ENCODE measurements at regions of chr12 and their contacts with region 1.

Region 1: DNA sequence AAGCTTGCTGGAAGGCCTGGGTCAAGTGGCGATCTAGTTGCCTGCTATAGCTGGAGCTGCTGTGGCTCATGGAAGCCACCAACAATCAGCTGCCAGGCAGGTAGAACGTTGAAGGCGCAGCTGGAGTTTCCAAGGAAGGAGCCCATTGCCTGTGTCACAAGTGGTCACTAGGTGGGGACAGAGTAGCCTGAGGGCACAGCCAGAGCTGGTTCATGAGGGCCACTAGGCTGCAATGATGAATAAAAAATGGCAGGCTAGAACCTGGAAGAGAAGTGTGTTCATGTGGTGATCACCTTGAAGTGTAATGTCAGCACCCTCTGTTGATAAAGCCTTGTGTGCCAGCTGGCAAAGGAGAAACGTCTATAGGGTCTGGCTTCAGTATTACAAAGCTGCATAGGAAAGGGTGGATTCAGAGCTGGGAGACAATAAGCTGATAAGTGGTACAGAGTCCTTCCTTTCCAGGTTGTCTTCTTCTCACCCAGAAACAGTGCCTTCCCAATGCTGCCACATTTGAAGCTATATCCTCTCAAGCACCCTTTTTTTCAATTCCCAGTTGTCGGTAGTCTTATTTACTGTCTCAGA is 165.8 kb downstream of the EMP1 start:
- DNase-seq: peak; percentile 77
- ATAC-seq: peak; percentile 99
- H3K4me3 ChIP-seq: no peak overlapping the region
- H3K27ac ChIP-seq: no peak overlapping the region
- H3K4me1 ChIP-seq: peaks cover 3 to 7% of the 10 kb centered on the region in 2 experiments; a peak in 3 of 4 replicates
- H3K27me3 ChIP-seq: no peaks in the 10 kb centered on the region
- CTCF ChIP-seq: peak; percentile 89 to 97 (median 94)
- POLR2A ChIP-seq: no peak
- RAD21 ChIP-seq: peak; percentile 88

Region 2: DNA sequence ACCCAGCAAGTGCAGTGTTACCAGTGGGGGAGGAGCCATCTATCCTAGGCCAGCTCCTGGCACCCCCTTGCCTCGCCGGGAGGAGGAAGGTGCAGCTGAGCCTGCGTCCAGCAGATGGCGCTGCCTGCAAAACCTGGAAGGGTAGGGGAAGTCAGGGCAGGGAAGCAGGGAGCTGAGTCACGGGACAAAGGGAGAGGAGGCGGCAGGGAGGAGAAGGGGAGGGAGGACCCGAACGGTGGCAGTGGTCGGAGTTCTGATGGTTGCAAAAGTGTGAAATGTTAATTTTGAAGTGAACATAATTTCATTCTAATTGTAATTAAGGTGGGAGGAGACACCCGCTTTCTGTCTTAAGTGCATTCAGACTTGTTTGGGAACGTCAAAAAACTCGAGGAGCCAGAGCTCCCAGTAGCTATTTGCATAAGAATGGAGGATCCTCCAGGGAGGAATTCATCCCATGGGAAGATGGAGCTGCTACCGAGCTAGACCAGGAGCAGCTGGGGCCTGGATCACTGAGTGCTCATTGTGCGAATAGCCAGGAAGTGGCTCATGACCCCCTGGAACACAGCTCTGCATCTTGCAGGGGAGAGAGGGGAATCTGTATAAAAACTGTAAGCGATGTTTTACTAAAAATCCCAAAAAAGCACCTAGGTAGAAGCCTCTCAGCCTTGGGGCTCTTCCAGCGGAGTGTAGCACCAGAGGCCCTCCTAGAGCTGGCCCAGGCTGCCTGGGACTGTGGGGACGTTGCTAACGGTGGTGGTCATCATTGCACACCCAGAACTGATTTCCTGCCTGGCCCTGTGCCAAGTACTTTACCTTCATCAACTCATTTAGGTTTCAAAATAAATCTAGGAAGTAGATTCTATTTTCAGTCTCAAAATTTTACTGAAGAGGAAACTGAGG is 106.3 kb before region 1 on chr12:
- CTCF ChIA-PET with region 1: interaction called, 16 read pairs
- POLR2A ChIA-PET with region 1: no interaction called
- RAD21 ChIA-PET with region 1: no interaction called
- intact Hi-C with region 1: no loop called
- DNase-seq: peak; percentile 89
- ATAC-seq: peak; percentile 100
- H3K4me3 ChIP-seq: peak overlapping the region in 1 of 2 experiments; percentile 13; a peak in 1 of 4 replicates
- H3K27ac ChIP-seq: no peak overlapping the region
- H3K4me1 ChIP-seq: peaks cover 0 to 15% of the 10 kb centered on the region in 2 experiments; a peak in 2 of 4 replicates
- H3K27me3 ChIP-seq: no peaks in the 10 kb centered on the region
- CTCF ChIP-seq: peak; percentile 91 to 98 (median 97)
- POLR2A ChIP-seq: no peak
- RAD21 ChIP-seq: peak; percentile 98

Region 3: GRCh38 chr12:13270817-13271216 is 91.5 kb before region 1 on chr12:
- CTCF ChIA-PET with region 1: no interaction called
- POLR2A ChIA-PET with region 1: no interaction called
- RAD21 ChIA-PET with region 1: no interaction called
- intact Hi-C with region 1: no loop called
- DNase-seq: no peak
- ATAC-seq: no peak
- H3K4me3 ChIP-seq: no peak overlapping the region
- H3K27ac ChIP-seq: no peak overlapping the region
- H3K4me1 ChIP-seq: no peaks in the 10 kb centered on the region
- H3K27me3 ChIP-seq: no peaks in the 10 kb centered on the region
- CTCF ChIP-seq: 0 out of 6 replicates have a peak, but pooled peaks of 1 of the 3 experiments have one; percentile 4
- POLR2A ChIP-seq: no peak
- RAD21 ChIP-seq: peak; percentile 35; the same call in 1 of the 2 replicates

Region 4: GRCh38 chr12:13347241-13348043 is 14.9 kb before region 1 on chr12:
- CTCF ChIA-PET with region 1: interaction called, 18 read pairs
- POLR2A ChIA-PET with region 1: interaction called, 5 read pairs
- RAD21 ChIA-PET with region 1: no interaction called
- intact Hi-C with region 1: no loop called
- DNase-seq: peak; percentile 27
- ATAC-seq: peak; percentile 74
- H3K4me3 ChIP-seq: no peak overlapping the region
- H3K27ac ChIP-seq: no peak overlapping the region
- H3K4me1 ChIP-seq: peaks cover 6 to 33% of the 10 kb centered on the region in 2 experiments
- H3K27me3 ChIP-seq: no peaks in the 10 kb centered on the region
- CTCF ChIP-seq: peak in 1 of 3 experiments; percentile 21; a peak in 1 of 6 replicates
- POLR2A ChIP-seq: no peak
- RAD21 ChIP-seq: no peak

Region 5: GRCh38 chr12:13373131-13373530 is 10.8 kb after region 1 on chr12:
- CTCF ChIA-PET with region 1: interaction called, 28 read pairs
- POLR2A ChIA-PET with region 1: no interaction called
- RAD21 ChIA-PET with region 1: no interaction called
- intact Hi-C with region 1: no loop called
- DNase-seq: no peak
- ATAC-seq: no peak
- H3K4me3 ChIP-seq: no peak overlapping the region
- H3K27ac ChIP-seq: no peak overlapping the region
- H3K4me1 ChIP-seq: peaks cover 8 to 22% of the 10 kb centered on the region in 2 experiments
- H3K27me3 ChIP-seq: no peaks in the 10 kb centered on the region
- CTCF ChIP-seq: no peak
- POLR2A ChIP-seq: no peak
- RAD21 ChIP-seq: no peak

Region 6: DNA sequence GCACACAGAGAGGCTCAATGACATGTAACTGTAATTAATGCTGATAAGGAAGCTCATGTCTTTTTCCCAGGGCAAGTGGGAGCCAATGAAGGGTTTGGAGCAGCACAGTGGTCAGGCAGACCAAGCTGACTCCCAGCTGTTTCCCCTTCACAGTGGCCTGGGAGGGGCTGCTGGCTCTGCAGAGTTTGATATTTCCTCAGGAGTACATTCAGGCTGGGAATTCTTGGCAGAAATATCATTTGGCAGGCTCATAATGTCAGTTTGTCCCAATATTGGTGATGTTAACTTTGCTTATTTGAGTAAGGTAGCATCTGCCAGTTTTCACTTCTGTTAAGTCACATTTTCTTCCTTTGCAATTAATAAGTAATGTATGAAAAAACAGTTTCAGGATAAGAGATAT is 81.1 kb after region 1 on chr12:
- CTCF ChIA-PET with region 1: no interaction called
- POLR2A ChIA-PET with region 1: no interaction called
- RAD21 ChIA-PET with region 1: no interaction called
- intact Hi-C with region 1: no loop called
- DNase-seq: no peak
- ATAC-seq: no peak
- H3K4me3 ChIP-seq: no peak overlapping the region
- H3K27ac ChIP-seq: no peak overlapping the region
- H3K4me1 ChIP-seq: no peaks in the 10 kb centered on the region
- H3K27me3 ChIP-seq: no peaks in the 10 kb centered on the region
- CTCF ChIP-seq: no peak
- POLR2A ChIP-seq: no peak
- RAD21 ChIP-seq: no peak

Region 7: DNA sequence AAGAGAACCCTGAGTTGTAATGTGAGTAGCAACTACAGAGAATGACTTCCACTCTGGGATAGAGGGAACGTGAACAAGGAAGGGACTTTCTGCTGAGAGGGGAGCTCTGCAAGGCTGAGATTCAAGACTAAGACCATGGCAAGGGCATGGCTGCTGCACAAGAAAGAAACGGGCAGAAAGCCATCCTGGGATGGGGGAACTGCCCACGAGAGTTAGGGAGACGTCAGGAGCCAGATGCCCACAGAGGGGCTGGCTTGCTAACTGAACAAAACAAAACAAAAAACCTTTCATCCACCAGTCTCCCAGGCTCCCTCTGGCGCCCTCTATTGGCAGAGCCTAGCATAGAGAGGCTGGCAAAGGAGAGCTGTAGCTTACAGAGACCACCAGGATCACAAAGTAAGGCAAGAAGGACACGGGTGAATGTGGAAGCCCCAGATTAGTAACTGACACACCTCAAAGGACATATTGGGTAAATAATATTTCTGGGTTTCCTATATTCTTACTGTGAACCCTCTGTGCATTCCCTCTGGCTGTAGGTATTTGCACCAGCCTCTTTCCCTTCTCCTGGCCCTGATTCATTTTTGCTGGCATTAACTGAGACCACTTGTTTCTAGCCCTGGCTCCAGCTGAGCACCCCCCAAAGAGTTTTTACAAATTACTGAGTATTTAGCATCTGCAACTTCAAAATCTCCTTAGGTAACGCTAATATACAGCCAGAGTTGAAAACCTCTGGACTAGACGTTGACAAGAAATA is 172.5 kb after region 1 on chr12:
- CTCF ChIA-PET with region 1: interaction called, 25 read pairs
- POLR2A ChIA-PET with region 1: interaction called, 4 read pairs
- RAD21 ChIA-PET with region 1: interaction called, 3 to 7 read pairs
- intact Hi-C with region 1: loop called (anchors 5 kb)
- DNase-seq: peak; percentile 51
- ATAC-seq: peak; percentile 87
- H3K4me3 ChIP-seq: no peak overlapping the region
- H3K27ac ChIP-seq: peak overlapping the region; percentile 7; the same call in 1 of the 2 replicates
- H3K4me1 ChIP-seq: peaks cover 34 to 36% of the 10 kb centered on the region in 2 experiments
- H3K27me3 ChIP-seq: no peaks in the 10 kb centered on the region
- CTCF ChIP-seq: peak; percentile 61 to 100 (median 99); a peak in 5 of 6 replicates
- POLR2A ChIP-seq: no peak
- RAD21 ChIP-seq: peak; percentile 69

Region 8: GRCh38 chr12:13661005-13661887 is 298.9 kb after region 1 on chr12:
- CTCF ChIA-PET with region 1: interaction called, 9 read pairs
- POLR2A ChIA-PET with region 1: no interaction called
- RAD21 ChIA-PET with region 1: no interaction called
- intact Hi-C with region 1: loop called (anchors 10 kb)
- DNase-seq: peak; percentile 47
- ATAC-seq: peak; percentile 99
- H3K4me3 ChIP-seq: no peak overlapping the region
- H3K27ac ChIP-seq: no peak overlapping the region
- H3K4me1 ChIP-seq: peaks cover 7 to 9% of the 10 kb centered on the region in 2 experiments; a peak in 3 of 4 replicates
- H3K27me3 ChIP-seq: no peaks in the 10 kb centered on the region
- CTCF ChIP-seq: peak; percentile 53 to 92 (median 84); a peak in 5 of 6 replicates
- POLR2A ChIP-seq: no peak
- RAD21 ChIP-seq: peak; percentile 78

Region 9: DNA sequence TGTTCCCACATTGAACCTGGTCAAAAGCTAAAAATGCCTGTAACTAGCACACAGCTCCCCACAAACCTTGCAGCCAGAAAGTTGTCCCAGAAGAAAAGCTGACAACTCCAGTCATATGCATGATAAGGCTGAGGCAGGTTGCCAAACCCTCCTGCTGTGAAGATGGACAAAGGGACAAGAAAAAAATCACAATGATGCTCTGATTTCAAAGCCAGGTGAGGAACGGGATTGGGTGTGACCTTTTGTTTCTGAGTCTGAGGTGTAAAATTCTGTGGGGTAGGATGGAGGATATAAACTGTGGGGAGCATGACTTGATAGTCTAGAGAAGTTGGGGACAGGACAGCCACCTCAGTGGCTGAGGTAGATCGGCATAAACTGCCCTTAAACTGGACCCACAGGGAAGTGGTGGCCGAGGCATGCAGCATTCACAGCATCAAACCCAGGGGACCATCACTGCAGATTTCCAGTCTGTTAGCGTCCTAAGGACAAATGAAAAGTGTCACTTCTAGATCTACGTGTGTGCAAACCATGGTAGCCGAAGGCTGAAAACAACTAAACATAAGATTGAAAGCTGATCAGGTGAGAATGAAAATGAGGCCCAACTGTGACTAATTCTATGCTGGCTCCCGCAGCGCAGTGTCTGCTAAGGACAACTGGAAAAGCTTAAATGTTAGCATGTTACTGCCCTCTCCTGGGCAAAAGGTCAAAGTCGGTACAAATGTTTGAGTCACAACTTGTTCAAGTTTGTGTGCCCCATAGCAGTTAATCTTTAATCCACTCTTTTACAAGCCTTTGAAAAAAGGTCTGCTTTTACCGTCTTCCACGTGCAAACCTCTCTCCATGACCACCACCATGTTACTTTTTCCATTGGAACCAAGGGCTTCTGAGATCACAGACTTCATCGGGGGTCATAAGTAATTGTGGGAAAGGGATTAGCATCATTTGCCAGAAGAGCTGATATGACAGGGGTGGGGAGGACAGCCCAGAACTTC is 579.2 kb after region 1 on chr12:
- CTCF ChIA-PET with region 1: interaction called, 9 read pairs
- POLR2A ChIA-PET with region 1: no interaction called
- RAD21 ChIA-PET with region 1: interaction called in 1 of 2 experiments, 4 read pairs
- intact Hi-C with region 1: loop called (anchors 5 kb)
- DNase-seq: peak; percentile 77
- ATAC-seq: peak; percentile 96
- H3K4me3 ChIP-seq: peak overlapping the region in 1 of 2 experiments; percentile 26; a peak in 1 of 4 replicates
- H3K27ac ChIP-seq: peak overlapping the region; percentile 67
- H3K4me1 ChIP-seq: peaks cover 22 to 23% of the 10 kb centered on the region in 2 experiments
- H3K27me3 ChIP-seq: no peaks in the 10 kb centered on the region
- CTCF ChIP-seq: peak; percentile 49 to 65 (median 61); a peak in 5 of 6 replicates
- POLR2A ChIP-seq: no peak
- RAD21 ChIP-seq: peak; percentile 88